CD8-positive, alpha-beta T cell (primary cell): ENCODE measurements at regions of chr22 and their contacts with region 1.

Region 1: DNA sequence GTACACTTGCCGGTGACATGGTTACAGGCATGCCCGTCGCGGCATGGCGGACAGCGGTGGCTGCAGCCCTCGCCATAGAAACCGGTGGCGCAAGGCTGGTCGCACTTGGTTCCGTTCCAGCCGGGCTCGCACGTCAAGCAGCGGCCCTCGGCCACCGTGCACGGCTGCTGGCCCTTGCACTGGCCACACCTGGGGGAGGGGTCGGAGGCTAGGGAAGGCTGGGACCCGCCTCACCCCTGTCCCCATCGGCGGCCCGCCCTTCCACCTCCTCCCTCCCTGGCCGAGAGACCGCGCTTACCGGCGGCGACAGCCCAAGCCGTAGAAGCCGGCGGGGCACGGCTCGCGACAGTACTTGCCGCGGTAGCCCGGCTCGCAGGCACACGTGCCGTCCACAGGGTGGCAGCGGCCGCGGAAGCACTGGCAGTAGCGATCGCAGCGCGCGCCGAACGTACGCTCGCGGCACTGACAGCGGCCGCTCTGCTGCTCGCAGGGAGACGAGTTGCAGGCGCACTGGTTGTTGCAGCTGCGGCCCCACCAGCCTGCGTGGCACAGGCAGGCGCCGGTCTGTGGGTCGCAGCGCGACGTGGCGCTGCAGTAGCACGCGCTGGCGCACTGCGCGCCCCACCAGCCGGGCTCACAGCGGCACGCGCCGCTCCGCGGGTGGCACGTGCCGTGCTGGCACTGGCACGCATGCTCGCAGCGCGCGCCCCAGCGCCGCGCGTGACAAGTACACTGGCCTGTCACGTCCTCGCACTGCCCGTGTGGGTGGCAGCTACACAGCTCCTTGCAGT is 6.7 kb downstream of the SCARF2 start:
- DNase-seq: peak; percentile 33 to 81 (median 62)
- ATAC-seq: peak; percentile 58
- H3K4me3 ChIP-seq: peak overlapping the region; percentile 60 to 67
- H3K4me3 Mint-ChIP-seq: peak overlapping the region; percentile 83
- H3K27ac ChIP-seq: no peak overlapping the region
- H3K27ac Mint-ChIP-seq: no peak overlapping the region
- H3K4me1 ChIP-seq: peaks cover 35% of the 10 kb centered on the region
- H3K4me1 Mint-ChIP-seq: peaks cover 35% of the 10 kb centered on the region
- H3K27me3 ChIP-seq: peaks cover 24 to 29% of the 10 kb centered on the region in 2 experiments
- H3K27me3 Mint-ChIP-seq: peaks cover 42% of the 10 kb centered on the region
- CTCF ChIP-seq: peak; percentile 18

Region 2: GRCh38 chr22:20479612-20480196 is 48.8 kb after region 1 on chr22:
- CTCF ChIA-PET with region 1: no interaction called
- POLR2A ChIA-PET with region 1: no interaction called
- intact Hi-C with region 1: no loop called
- DNase-seq: no peak
- ATAC-seq: no peak
- H3K4me3 ChIP-seq: no peak overlapping the region
- H3K4me3 Mint-ChIP-seq: no peak overlapping the region
- H3K27ac ChIP-seq: no peak overlapping the region
- H3K27ac Mint-ChIP-seq: no peak overlapping the region
- H3K4me1 ChIP-seq: peaks cover 10% of the 10 kb centered on the region
- H3K4me1 Mint-ChIP-seq: peaks cover 24% of the 10 kb centered on the region
- H3K27me3 ChIP-seq: no peaks in the 10 kb centered on the region
- H3K27me3 Mint-ChIP-seq: no peaks in the 10 kb centered on the region
- CTCF ChIP-seq: no peak

Region 3: DNA sequence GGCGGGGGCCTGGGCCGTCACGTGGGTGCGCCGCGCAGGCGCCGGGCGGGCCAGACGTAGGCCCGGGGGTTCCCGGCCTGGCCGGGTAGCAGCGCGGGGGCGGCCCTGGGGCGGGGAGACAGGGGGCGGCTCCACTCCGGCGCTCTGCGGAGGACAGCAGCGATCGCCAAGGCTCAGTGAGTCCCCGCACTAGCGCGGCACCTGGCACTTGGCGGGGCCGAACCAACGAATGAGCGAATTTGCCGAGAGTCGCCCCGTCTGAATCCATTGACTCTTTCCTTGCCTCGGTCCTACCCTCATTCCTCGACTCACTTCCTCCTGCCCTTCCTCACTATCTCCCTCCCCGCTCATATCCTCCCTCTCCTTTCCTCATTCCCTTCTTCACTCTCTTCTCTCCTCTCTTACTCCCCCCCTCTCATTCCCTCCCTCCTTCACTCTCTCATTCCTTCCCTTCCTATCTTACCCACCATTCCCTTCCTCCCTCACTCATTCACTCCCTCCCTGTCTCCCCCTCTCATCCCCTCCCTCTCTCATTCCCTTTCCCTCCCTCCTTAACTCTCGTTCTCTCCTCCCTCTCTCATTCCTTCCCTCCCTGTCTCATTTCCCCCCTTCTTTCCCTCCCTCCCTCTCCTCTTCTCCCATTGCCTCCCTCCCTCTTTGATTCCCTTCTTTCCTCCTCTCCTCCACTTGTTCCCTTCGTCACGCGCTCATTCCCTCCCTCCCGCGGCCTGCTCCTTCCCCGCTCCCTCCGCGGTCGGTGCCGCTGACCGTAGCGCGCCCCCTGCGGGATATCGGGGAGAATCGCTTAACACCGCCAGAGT is 65.2 kb after region 1 on chr22:
- CTCF ChIA-PET with region 1: no interaction called
- POLR2A ChIA-PET with region 1: interaction called, 3 read pairs
- intact Hi-C with region 1: loop called in 1 of 2 experiments (anchors 1 kb)
- DNase-seq: peak; percentile 83 to 96 (median 91)
- ATAC-seq: peak; percentile 96
- H3K4me3 ChIP-seq: peak overlapping the region; percentile 75 to 83
- H3K4me3 Mint-ChIP-seq: peak overlapping the region; percentile 89
- H3K27ac ChIP-seq: peak overlapping the region; percentile 61 to 98
- H3K27ac Mint-ChIP-seq: peak overlapping the region; percentile 91
- H3K4me1 ChIP-seq: peaks cover 42% of the 10 kb centered on the region
- H3K4me1 Mint-ChIP-seq: peaks cover 41% of the 10 kb centered on the region
- H3K27me3 ChIP-seq: no peaks in the 10 kb centered on the region
- H3K27me3 Mint-ChIP-seq: no peaks in the 10 kb centered on the region
- CTCF ChIP-seq: peak; percentile 95

Region 4: DNA sequence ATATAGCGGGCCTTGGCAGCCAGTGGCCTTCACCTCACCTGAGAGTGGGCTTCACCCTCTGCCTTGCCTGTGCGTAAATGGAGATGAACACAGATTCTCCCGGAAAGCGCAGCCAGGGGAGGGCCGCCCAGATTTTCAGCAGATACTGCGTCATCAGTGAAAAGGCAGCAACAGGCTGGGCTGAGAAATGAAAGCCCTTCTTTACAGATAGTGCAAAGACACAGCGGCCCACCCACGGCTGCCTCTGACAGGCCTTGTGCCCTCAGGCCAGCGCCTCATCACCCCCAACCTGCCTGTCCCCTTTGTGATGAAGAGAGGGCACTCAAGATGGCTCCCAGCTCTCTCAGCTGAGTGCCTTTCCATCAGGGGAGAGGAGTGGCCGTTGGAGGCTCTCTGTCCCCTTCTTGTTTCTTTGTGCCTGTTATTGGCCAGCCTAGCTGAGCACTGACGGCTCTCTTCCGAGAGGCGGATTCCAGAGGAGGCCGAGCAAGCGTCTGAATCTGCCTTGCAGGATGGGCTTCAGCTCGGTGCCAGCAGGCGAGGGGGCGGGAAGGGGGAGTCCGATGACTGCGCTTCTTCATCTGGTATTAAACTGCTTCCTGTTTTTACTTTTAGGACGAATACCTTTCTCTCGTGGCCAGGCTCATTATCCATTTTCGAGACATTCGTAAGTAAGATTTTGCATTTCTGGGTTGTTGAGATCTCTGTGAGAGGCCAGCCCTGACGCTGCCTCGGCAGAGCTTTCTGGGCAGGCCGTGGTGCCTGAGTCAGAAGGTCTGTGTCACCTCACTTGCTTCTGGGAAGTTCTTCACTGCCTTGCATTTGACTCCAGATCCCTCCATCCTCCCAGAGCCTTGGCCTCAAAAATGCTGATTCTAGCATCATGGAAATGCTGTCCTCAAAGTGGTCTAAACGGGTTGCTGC is 120.2 kb after region 1 on chr22:
- CTCF ChIA-PET with region 1: no interaction called
- POLR2A ChIA-PET with region 1: no interaction called
- intact Hi-C with region 1: no loop called
- DNase-seq: peak; percentile 41 to 87 (median 68)
- ATAC-seq: peak; percentile 61
- H3K4me3 ChIP-seq: peak overlapping the region; percentile 18 to 46
- H3K4me3 Mint-ChIP-seq: peak overlapping the region; percentile 89
- H3K27ac ChIP-seq: peak overlapping the region; percentile 86 to 87
- H3K27ac Mint-ChIP-seq: peak overlapping the region; percentile 97
- H3K4me1 ChIP-seq: peaks cover 92% of the 10 kb centered on the region
- H3K4me1 Mint-ChIP-seq: peaks cover 90% of the 10 kb centered on the region
- H3K27me3 ChIP-seq: no peaks in the 10 kb centered on the region
- H3K27me3 Mint-ChIP-seq: no peaks in the 10 kb centered on the region
- CTCF ChIP-seq: no peak